BJ (cell line): ENCODE measurements at regions of chr12 and their contacts with region 1.

Region 1: DNA sequence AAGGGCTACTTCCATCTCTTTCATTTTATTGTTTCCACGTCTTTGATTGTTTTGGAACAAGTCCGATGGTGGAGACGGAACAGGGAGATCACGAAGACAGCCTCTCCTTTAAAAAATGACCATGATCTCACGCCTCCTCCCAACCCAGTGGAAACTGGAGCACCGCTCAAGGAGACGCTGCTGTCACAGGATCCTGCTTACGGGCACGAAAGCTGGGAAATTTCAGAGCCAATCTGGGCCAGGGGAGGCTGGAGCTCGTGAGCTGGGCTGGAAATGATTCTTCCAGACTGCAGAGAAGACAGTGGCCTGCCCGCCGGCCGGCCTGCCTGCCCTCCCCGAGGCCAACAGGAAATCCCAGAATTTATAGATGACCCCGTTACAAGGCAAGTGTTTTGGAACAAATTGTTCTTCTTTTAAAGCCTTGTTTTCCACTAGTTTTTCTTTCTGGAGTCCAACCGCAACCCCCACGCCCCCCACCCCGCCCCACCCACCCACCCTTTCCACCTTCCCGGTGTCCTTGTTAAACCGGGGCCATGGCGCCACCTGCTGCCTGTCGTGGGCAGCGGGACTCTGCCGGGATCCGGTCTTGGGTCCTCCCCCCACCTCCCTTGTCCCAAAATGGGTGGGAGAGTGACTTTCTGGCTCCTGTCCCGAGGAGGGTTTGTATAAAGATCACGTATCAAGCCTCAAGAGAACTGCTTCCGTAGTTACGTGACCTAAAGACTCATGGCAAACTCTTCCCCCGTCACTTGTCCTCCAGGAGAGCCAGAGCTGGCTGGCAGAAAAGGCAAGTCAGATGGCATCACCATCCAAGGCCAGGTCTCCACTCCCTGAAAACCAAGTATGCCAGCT is 40.3 kb downstream of the MAP1LC3B2 start:
- DNase-seq: peak; percentile 33
- H3K4me3 ChIP-seq: peak overlapping the region; percentile 15; the same call in 1 of the 2 replicates
- H3K27me3 ChIP-seq: no peaks in the 10 kb centered on the region
- CTCF ChIP-seq: peak; percentile 75

Region 2: DNA sequence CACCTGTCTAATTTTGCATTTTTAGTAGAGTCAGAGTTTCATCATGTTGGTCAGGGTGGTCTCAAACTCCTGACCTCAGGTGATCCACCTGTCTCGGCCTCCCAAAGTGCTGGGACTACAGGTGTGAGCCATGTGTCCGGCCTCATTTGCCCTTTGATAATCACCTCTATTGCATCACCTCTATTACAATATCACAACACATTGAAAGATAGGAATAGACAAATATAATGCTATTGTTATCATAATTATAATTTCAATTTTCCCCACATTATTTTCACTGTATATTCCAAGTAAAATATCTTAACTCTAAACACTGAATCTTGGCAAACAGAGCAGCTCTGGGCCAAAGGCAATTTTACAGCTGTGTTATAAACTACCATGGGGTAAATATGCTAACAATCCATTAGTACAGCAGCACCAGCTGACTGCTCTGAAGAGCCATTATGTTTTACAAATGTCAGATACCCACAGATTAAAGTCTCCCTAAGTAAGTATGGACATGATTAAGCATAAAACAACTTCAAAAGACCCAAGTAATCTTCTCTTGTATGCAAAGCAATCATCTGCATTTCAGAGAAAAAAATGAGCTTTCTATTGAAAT is 495.2 kb before region 1 on chr12:
- CTCF ChIA-PET with region 1: no interaction called
- POLR2A ChIA-PET with region 1: no interaction called
- DNase-seq: no peak
- H3K4me3 ChIP-seq: no peak overlapping the region
- H3K27me3 ChIP-seq: no peaks in the 10 kb centered on the region
- CTCF ChIP-seq: no peak

Region 3: GRCh38 chr12:116533343-116534251 is 65.9 kb before region 1 on chr12:
- CTCF ChIA-PET with region 1: interaction called, 3 read pairs
- POLR2A ChIA-PET with region 1: interaction called, 16 read pairs
- DNase-seq: no peak
- H3K4me3 ChIP-seq: peak overlapping the region; percentile 50
- H3K27me3 ChIP-seq: no peaks in the 10 kb centered on the region
- CTCF ChIP-seq: no peak

Region 4: GRCh38 chr12:116609319-116610114 is 10.0 kb after region 1 on chr12:
- CTCF ChIA-PET with region 1: interaction called, 13 read pairs
- POLR2A ChIA-PET with region 1: no interaction called
- DNase-seq: no peak
- H3K4me3 ChIP-seq: no peak overlapping the region
- H3K27me3 ChIP-seq: peaks cover 2% of the 10 kb centered on the region; the same call in 1 of the 2 replicates
- CTCF ChIP-seq: no peak